Left ventricle myocardium superior (tissue), 1 donor: ENCODE measurements at regions of chr13 and their contacts with region 1.

Region 1: GRCh38 chr13:102141625-102142472 is 260.0 kb downstream of the FGF14 start:
- DNase-seq: no peak
- ATAC-seq: no peak

Region 2: GRCh38 chr13:102220681-102221228 is 78.9 kb after region 1 on chr13:
- intact Hi-C with region 1: no loop called
- DNase-seq: no peak
- ATAC-seq: no peak

Region 3: DNA sequence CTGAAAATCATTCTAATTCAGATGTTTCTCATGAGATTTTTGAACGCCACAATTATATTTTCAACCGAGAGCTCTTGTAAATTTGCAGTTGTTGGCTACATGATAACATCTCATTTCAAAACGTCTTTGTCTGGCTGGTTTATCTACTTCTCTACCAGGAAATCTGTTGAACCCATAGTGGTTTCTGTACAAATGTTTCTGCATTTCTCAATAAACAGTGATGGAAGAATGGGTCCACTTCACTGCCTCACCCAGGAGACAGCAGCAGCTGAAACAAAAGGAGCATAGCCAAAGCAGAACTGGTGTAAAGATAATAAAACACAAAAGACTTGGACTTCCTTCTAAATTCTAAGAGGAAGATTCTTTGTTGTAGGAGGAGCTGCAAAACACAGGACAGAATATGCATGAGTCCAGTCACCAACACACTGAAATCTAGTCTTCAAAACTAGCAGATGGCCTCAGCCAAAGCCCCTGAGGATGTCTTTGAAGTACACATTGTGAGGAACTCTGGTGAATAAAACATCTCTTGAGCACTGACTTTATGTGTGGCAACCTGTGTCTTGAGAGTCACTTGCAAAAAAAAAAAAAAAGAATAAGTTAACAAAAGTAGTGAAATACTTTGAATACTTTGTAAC is 328.6 kb after region 1 on chr13:
- intact Hi-C with region 1: loop called (anchors 10 kb)
- DNase-seq: no peak
- ATAC-seq: no peak